GM10248 (cell line): ENCODE measurements at regions of chr7 and their contacts with region 1.

Region 1: DNA sequence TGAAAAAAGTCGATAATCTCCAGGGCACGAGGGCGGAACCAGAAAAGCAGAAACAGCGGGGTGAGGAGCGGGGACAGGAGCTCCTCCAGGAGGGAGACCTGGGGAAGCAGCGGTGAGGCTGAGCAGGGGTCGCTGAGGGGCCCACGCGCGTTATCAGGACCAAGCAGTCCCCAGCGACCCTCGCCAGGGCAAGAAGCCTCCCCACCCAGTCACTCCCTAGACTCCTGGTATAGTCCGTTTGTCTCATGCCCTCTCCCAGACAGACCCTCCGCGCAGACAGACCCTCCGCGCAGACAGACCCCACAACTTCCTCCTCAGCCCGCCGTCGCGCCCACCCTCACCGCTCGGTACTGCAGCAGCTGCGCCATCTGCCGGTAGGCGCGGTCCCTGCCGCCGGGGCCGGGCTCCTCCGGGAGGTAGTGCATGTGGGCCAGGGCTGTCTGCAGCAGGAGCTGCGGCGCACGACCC is 6.3 kb downstream of the ATG9B start:
- DNase-seq: peak; percentile 83
- CTCF ChIP-seq: peak; percentile 95

Region 2: GRCh38 chr7:150753826-150754603 is 264.0 kb before region 1 on chr7:
- CTCF ChIA-PET with region 1: no interaction called
- POLR2A ChIA-PET with region 1: no interaction called
- DNase-seq: peak; percentile 38
- CTCF ChIP-seq: peak; percentile 38

Region 3: GRCh38 chr7:150974468-150975391 is 43.3 kb before region 1 on chr7:
- CTCF ChIA-PET with region 1: interaction called, 16 read pairs
- POLR2A ChIA-PET with region 1: no interaction called
- DNase-seq: peak; percentile 74
- CTCF ChIP-seq: peak; percentile 55

Region 4: DNA sequence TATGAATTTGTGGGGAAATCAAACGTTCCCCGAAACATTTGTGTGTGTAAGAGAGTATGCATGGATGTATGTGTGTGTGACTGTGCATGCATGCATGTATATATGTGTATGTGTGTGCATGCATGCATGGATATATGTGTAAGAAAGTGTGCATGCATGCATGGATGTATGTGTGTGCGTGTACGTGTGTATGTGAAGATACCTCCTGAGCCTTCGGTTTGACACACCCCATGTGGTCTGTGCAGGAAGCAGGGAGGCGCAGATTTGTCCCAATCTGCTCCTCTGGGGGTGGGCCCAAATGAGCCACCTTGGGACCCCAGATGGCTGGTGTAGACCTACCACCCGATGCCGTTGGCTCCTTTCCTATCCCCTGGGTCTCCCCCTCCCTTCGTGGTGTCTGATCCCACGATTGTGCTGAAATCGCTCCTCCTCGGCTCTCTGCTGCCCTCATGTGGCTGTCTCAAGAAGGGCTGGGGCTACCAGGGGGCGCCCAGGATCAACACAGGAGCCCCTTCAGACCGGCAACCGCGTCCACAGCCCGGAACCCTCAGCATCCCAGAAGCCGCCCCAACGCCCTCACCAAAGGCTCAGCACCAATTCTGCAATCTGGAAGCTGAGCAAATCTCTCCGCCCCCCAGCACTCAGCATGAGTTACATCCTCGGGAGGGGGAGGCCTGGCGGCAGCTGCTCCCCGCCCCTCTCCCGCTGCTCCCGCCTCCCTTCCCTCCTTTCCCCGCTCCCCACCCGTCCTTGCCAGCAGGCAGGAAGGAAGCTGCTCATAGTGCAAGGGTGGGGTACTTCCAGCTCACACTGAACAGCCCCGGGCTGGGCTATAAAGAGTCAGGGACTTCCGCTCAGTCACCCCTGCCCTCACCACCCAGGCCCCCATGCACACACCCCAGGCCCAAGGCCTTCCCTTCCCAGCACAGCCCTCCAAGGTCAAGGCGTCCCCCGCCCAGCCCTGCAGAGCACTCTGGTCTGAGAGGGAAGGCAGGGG is 29.5 kb before region 1 on chr7:
- CTCF ChIA-PET with region 1: interaction called, 11 read pairs
- POLR2A ChIA-PET with region 1: no interaction called
- DNase-seq: peak; percentile 78
- CTCF ChIP-seq: peak; percentile 73

Region 5: DNA sequence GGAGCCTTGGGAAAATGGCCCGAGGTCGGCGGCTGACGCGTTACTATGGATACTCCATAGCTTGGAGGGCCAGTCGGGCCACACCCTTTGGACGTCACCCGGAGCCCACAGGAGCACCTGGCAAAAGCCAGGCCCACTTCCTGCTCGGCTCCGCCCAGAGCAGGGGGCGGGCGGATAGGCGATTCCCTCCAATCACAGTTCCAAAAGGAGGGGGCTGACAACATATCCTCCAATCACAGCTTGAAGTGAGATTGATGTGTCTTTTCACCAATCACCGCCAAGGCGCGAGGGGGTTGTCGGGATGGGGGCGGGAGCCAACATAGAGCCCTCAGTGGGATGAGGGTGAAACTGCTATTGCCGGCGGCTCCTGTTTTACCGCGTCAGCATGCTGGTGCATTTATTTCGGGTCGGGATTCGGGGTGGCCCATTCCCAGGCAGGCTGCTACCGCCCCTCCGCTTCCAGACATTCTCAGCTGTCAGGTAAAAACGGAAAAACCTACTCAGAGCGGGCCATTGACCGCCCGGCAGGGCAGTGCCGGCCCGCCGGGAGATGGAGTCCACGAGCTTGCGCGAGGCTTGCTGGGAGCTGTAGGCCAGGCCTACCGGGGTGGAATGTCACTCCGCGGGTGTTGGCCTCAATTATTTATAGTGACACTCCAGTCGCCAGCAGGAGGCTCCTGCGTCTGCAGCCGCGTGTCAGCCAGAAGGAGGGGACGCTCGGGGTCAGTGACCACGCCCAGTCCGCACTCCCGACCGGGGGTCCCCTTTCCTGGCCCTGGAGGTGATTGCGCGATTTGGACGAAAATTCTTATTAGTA is 10.4 kb after region 1 on chr7 and contains the start of gene ABCB8:
- CTCF ChIA-PET with region 1: interaction called, 84 read pairs
- POLR2A ChIA-PET with region 1: no interaction called
- DNase-seq: peak; percentile 100
- CTCF ChIP-seq: peak; percentile 37

Region 6: GRCh38 chr7:151110941-151111645 is 93.1 kb after region 1 on chr7:
- CTCF ChIA-PET with region 1: interaction called, 10 read pairs
- POLR2A ChIA-PET with region 1: no interaction called
- DNase-seq: peak; percentile 92
- CTCF ChIP-seq: peak; percentile 94